ENCODE measurements at regions of chr10 and their contacts with region 1.

Region 1: DNA sequence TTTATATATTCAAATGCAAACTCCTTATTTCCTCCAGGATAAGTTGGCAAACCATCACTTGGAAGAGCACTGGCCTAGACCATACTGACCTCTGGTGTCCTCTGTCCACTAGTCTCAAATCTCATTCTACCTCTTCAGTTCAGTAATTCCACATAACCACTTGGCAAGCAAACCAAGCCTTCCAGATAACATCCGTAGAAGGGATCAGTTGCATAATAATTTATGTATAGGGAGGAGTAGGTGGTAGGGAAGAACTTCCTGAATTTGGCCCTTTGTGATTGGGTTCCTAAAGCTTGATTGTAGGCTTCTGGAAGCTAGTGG is 55.0 kb downstream of the WAC start:
- DNase-seq: no peak
- H3K4me3 ChIP-seq: no peak overlapping the region
- H3K27ac ChIP-seq: peak overlapping the region in 5 of 8 donors; percentile 13 to 43 (median 28)
- H3K4me1 ChIP-seq: peaks cover 15 to 82% (median 47%) of the 10 kb centered on the region in 6 donors
- H3K27me3 ChIP-seq: no peaks in the 10 kb centered on the region
- CTCF ChIP-seq: peak in 1 of 11 experiments; percentile 9
- POLR2A ChIP-seq: no peak

Region 2: DNA sequence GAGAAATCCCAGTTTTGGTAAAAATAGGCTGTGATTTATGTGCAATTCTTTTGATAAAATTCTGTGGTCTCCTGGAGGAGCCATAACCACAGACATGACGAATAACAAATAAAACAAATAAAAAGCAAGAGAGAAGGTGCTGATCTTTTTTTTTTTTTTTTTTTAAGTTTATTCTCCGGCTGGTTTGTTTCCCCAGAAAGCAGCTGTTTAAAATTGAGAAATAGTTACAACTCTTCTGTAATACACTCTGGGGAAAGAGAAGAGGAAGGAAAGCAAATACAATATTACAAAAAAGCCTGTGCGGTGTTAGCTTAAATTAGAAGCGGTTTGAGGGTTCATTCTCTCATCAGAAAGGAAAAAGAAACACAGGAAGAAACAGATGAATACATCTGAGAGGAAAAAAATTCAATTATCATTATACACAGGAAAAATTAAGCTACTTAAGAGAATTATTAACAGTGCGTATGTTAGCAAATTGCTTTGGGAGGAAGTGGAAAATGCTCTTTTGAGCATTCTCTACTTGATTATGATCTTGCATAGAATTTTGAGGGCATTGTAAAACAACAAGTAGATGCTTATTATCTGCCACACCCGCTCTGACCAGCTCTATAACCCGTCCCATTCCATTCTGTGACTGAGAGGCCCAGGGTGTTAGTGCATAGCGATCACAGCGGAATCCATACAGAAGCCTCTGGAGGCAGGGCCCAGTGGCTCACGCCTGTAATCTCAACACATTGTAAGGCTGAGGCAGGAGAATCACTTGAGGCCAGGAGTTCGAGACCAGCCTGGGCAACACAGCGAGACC is 95.6 kb before region 1 on chr10:
- intact Hi-C with region 1: no loop called
- DNase-seq: no peak
- H3K4me3 ChIP-seq: peak overlapping the region in 1 of 8 donors; percentile 34
- H3K27ac ChIP-seq: peak overlapping the region in 7 of 8 donors; percentile 65 to 88 (median 77)
- H3K4me1 ChIP-seq: peaks cover 0 to 37% (median 0%) of the 10 kb centered on the region in 6 donors
- H3K27me3 ChIP-seq: no peaks in the 10 kb centered on the region
- CTCF ChIP-seq: no peak
- POLR2A ChIP-seq: no peak

Region 3: GRCh38 chr10:28532383-28533175 is 55.4 kb before region 1 on chr10 and contains the start of gene WAC:
- intact Hi-C with region 1: loop called (anchors 10 kb)
- DNase-seq: peak; percentile 99
- H3K4me3 ChIP-seq: peak within 1 kb of the TSS; percentile 67 to 95 (median 86)
- H3K27ac ChIP-seq: peak within 1 kb of the TSS; percentile 98 to 100 (median 99)
- H3K4me1 ChIP-seq: peaks cover 29 to 77% (median 55%) of the 10 kb centered on the region in 6 donors
- H3K27me3 ChIP-seq: no peaks in the 10 kb centered on the region
- CTCF ChIP-seq: peak in 6 of 11 experiments; percentile 16 to 49 (median 32)
- POLR2A ChIP-seq: peak in 2 of 3 donors; percentile 19 to 70
- total RNA-seq, gene WAC: 139 to 181 (median 150) TPM

Measured in spleen (tissue), 13 donors.